Activated B cell treated with CpG ODN at 0.5 μM for 24 hours (primary cell): ENCODE measurements at regions of chr10 and their contacts with region 1.

Region 1: GRCh38 chr10:43648398-43649184 is at the start of gene ZNF32:
- DNase-seq: peak; percentile 79
- ATAC-seq: peak; percentile 98
- H3K4me3 Mint-ChIP-seq: peak within 1 kb of the TSS; percentile 94
- H3K27ac Mint-ChIP-seq: peak within 1 kb of the TSS; percentile 77
- H3K4me1 Mint-ChIP-seq: peaks cover 20% of the 10 kb centered on the region
- H3K27me3 Mint-ChIP-seq: peaks cover 4% of the 10 kb centered on the region
- CTCF ChIP-seq: no peak
- total RNA-seq, gene ZNF32: 26.7 and 30.1 TPM in 2 replicates

Region 2: GRCh38 chr10:42638055-42638820 is 1010.4 kb before region 1 on chr10 and contains the start of gene ZNF33B:
- CTCF ChIA-PET with region 1: no interaction called
- POLR2A ChIA-PET with region 1: no interaction called
- intact Hi-C with region 1: loop called (anchors 2 kb)
- DNase-seq: peak; percentile 88
- ATAC-seq: peak; percentile 96
- H3K4me3 Mint-ChIP-seq: peak within 1 kb of the TSS; percentile 96
- H3K27ac Mint-ChIP-seq: peak within 1 kb of the TSS; percentile 96
- H3K4me1 Mint-ChIP-seq: peaks cover 46% of the 10 kb centered on the region
- H3K27me3 Mint-ChIP-seq: no peaks in the 10 kb centered on the region
- CTCF ChIP-seq: no peak
- total RNA-seq, gene ZNF33B: 31.0 and 34.0 TPM in 2 replicates

Region 3: DNA sequence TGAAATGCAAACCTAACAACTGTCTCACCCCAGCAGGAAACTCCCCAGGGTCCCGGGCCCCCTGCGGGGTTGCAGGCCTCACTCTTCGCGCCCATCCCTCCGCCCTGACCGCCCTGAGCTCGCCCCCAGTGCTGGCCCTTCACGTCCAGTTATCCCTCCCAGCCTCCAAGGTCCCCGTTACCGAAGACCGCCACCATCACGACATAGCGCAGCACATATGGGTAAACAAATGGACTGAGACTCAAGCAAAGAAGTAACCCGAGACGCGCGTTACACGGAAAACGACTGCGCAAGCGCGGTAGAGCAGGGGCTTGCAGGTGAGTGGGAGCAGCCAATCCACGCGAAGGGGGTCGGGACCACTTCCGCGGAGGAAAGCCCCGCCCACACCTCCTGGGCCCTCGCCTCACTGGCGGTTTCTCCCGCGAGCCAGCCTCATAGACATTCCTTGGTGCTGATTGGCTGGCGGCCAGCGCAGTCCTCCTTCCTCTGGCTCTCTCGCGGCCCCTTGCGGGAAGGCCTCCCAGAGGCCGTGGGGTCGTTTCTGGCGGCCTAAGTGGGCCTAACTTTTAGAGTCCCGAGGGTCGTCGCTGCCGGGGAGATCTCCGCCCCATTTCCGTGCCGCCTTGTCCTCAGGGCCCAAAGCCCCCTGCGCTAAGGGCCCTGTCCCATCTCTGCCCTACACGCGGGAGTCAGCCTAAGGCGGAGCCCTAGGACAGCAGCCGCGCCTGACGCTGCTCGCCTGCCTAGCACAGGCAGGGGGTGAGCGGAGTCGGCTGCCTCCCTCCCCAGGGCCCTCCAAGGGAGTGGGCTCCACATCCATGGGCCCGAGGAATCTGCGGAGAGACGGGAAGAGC is 286.4 kb before region 1 on chr10:
- CTCF ChIA-PET with region 1: no interaction called
- POLR2A ChIA-PET with region 1: interaction called, 5 read pairs
- intact Hi-C with region 1: loop called (anchors 1 kb)
- DNase-seq: peak; percentile 86
- ATAC-seq: peak; percentile 98
- H3K4me3 Mint-ChIP-seq: peak overlapping the region; percentile 97
- H3K27ac Mint-ChIP-seq: peak overlapping the region; percentile 93
- H3K4me1 Mint-ChIP-seq: peaks cover 23% of the 10 kb centered on the region
- H3K27me3 Mint-ChIP-seq: no peaks in the 10 kb centered on the region
- CTCF ChIP-seq: no peak

Region 4: DNA sequence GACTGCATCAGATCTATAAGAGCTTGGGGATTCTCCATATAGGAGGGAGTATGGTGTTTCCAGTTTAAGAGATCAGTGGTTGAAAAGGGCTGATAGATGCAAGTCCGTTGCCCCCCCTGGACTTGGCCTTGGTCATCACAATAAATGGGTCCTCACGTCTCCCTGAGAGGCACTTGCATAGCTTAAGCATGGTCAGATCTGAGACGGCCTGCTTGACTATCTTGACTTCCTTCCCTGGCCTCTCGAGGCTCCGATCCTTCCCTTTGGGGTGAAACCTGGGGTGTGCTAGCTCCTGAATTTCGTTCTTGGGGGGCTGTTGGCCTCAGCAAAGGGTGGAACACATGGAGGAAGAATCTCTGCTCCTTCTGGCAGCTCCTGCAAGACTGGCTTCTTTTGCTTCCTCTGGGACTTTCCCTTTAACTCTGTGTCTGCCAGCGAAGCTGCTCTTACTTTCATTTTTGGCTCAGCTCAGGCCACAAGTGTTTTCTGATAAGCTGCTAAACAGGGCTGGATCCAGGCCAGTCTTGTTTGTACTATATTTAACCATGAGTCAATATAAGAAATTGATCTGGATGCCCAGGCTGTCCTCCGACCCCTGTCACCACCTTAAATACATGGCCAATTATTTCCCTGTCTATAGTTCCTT is 53.5 kb before region 1 on chr10:
- CTCF ChIA-PET with region 1: no interaction called
- POLR2A ChIA-PET with region 1: interaction called, 3 read pairs
- intact Hi-C with region 1: loop called (anchors 1 kb)
- DNase-seq: no peak
- ATAC-seq: peak; percentile 90
- H3K4me3 Mint-ChIP-seq: peak overlapping the region; percentile 85
- H3K27ac Mint-ChIP-seq: peak overlapping the region; percentile 90
- H3K4me1 Mint-ChIP-seq: peaks cover 26% of the 10 kb centered on the region
- H3K27me3 Mint-ChIP-seq: no peaks in the 10 kb centered on the region
- CTCF ChIP-seq: no peak

Region 5: GRCh38 chr10:43689955-43690771 is 41.6 kb after region 1 on chr10:
- CTCF ChIA-PET with region 1: no interaction called
- POLR2A ChIA-PET with region 1: no interaction called
- intact Hi-C with region 1: loop called (anchors 2 kb)
- DNase-seq: peak; percentile 69
- ATAC-seq: peak; percentile 97
- H3K4me3 Mint-ChIP-seq: peak overlapping the region; percentile 80
- H3K27ac Mint-ChIP-seq: no peak overlapping the region
- H3K4me1 Mint-ChIP-seq: peaks cover 14% of the 10 kb centered on the region
- H3K27me3 Mint-ChIP-seq: peaks cover 31% of the 10 kb centered on the region
- CTCF ChIP-seq: no peak